B cell (primary cell): ENCODE measurements at regions of chr3 and their contacts with region 1.

Region 1: DNA sequence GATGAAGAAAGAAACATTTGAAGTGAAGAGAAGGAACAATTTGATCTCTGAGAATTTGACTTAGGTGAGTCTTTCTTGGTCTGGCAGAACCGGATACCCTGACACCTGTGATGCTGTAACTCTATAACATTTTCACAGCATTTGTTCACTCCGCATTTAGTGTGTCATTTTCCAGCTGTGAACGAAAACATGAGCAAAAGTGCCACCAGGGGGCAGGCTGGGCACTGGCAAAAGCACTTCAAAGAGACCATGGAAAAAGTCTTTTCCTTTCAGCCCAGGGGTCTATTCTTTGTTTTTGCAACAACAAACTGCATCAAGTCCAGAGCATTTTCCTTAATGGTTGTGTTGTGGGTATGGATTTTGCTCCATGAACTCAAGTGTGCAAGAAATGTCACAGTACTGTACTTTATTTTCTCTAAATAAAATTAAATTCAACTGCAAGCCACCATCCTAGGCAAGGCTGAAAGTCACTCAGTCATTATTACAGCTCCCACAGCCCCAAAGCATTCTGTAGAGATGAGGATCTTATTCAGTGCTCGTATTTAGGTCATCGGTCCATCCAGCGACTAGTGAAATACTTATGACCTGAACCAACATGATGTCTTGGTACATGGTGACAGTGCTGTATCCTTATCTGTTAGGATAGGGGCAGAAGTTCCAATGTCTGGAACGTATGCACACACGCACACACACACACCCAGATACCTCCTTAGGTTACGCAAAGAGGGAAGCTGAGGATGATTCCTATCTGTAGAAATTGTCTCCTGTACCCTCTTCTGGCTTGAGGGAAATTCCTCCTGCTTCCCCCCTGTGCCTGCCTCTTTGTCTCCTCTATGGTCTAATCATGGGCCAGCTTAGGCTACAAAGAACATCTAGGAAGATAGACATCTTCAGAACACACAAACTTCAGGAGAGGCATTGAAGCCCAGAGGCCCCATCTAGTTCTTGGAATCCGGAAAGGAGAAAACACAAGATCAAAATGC is 125.5 kb downstream of the GADL1 start:
- DNase-seq: peak; percentile 59
- ATAC-seq: peak; percentile 36
- H3K4me3 ChIP-seq: no peak overlapping the region
- H3K4me3 Mint-ChIP-seq: no peak overlapping the region
- H3K27ac ChIP-seq: no peak overlapping the region
- H3K27ac Mint-ChIP-seq: no peak overlapping the region
- H3K4me1 ChIP-seq: no peaks in the 10 kb centered on the region
- H3K4me1 Mint-ChIP-seq: no peaks in the 10 kb centered on the region
- H3K27me3 ChIP-seq: no peaks in the 10 kb centered on the region
- H3K27me3 Mint-ChIP-seq: peaks cover 17% of the 10 kb centered on the region
- CTCF ChIP-seq: peak; percentile 87

Region 2: DNA sequence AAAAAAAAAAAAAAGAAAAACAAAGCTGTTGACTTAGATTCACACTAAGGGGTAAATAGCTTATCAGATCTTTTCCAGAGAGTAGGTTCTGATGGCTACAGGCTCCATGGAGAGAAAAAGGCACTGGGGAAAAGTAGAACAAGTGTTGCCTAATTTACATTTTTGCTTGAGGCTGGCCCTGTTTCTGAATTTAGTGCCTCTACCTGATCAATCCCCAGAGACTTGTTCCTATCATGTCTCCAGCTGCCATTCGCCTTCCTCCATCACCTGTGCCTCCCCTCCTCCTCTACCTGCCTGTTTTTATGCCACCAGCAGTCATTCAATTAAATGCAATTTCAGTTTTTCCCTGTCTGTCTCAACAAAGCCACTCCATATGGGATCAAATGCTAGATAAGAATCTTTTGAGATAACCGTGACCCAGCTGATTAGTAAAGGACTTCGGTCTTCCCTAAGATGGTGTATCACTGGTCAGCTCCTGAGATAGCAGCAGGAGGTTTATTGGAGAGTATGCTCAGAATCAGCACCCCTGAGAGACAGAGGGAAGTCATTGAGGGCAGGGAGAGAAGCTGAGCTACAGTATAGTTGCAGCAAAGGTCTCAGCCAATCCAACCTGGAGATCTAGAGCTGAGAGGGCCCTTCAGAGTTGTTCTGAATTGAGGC is 213.6 kb after region 1 on chr3:
- CTCF ChIA-PET with region 1: no interaction called
- POLR2A ChIA-PET with region 1: no interaction called
- intact Hi-C with region 1: no loop called
- DNase-seq: no peak
- ATAC-seq: no peak
- H3K4me3 ChIP-seq: no peak overlapping the region
- H3K4me3 Mint-ChIP-seq: no peak overlapping the region
- H3K27ac ChIP-seq: no peak overlapping the region
- H3K27ac Mint-ChIP-seq: no peak overlapping the region
- H3K4me1 ChIP-seq: no peaks in the 10 kb centered on the region
- H3K4me1 Mint-ChIP-seq: peaks cover 5% of the 10 kb centered on the region
- H3K27me3 ChIP-seq: no peaks in the 10 kb centered on the region
- H3K27me3 Mint-ChIP-seq: peaks cover 8% of the 10 kb centered on the region
- CTCF ChIP-seq: no peak

Region 3: GRCh38 chr3:31448035-31448881 is 679.3 kb after region 1 on chr3:
- CTCF ChIA-PET with region 1: interaction called, 3 read pairs
- POLR2A ChIA-PET with region 1: no interaction called
- intact Hi-C with region 1: loop called (anchors 5 kb)
- DNase-seq: peak; percentile 32
- ATAC-seq: no peak
- H3K4me3 ChIP-seq: no peak overlapping the region
- H3K4me3 Mint-ChIP-seq: no peak overlapping the region
- H3K27ac ChIP-seq: no peak overlapping the region
- H3K27ac Mint-ChIP-seq: no peak overlapping the region
- H3K4me1 ChIP-seq: peaks cover 4 to 5% of the 10 kb centered on the region in 2 donors
- H3K4me1 Mint-ChIP-seq: peaks cover 9% of the 10 kb centered on the region
- H3K27me3 ChIP-seq: no peaks in the 10 kb centered on the region
- H3K27me3 Mint-ChIP-seq: peaks cover 9% of the 10 kb centered on the region
- CTCF ChIP-seq: peak; percentile 16